ENCODE measurements at regions of chr3 and their contacts with region 1.

Region 1: DNA sequence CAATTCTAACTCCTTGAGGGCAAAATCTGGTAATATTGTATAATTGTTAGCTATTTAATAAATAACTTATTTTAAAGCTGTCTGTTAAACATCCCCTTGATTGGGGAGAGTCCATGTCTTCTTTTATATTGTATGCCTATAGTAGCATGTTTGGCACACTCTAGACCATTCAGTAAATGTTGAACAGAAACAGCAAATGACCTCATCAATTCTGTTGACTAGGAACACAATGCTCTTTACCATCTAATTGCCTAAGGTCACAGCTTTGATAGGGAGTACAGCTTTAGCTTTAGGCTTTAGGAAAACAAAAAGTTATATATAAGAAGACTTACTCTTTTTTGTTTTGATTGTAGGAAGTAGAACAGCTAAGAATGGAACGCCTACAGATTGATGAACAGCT is 27.0 kb downstream of the DNAJC19 start:
- DNase-seq: no peak
- ATAC-seq: no peak
- H3K4me3 Mint-ChIP-seq: no peak overlapping the region
- H3K27ac Mint-ChIP-seq: no peak overlapping the region
- H3K4me1 Mint-ChIP-seq: peaks cover 26% of the 10 kb centered on the region
- H3K27me3 Mint-ChIP-seq: no peaks in the 10 kb centered on the region

Region 2: GRCh38 chr3:180679178-180680096 is 283.1 kb before region 1 on chr3 and contains the start of gene CCDC39:
- CTCF ChIA-PET with region 1: no interaction called
- POLR2A ChIA-PET with region 1: no interaction called
- intact Hi-C with region 1: no loop called
- DNase-seq: peak; percentile 80
- ATAC-seq: peak; percentile 87
- H3K4me3 Mint-ChIP-seq: peak within 1 kb of the TSS; percentile 62
- H3K27ac Mint-ChIP-seq: no peak within 1 kb of the TSS
- H3K4me1 Mint-ChIP-seq: peaks cover 13% of the 10 kb centered on the region
- H3K27me3 Mint-ChIP-seq: peaks cover 49% of the 10 kb centered on the region
- total RNA-seq, gene CCDC39: not detected

Region 3: GRCh38 chr3:180973543-180973942 is 11.0 kb after region 1 on chr3:
- CTCF ChIA-PET with region 1: interaction called, 11 read pairs
- POLR2A ChIA-PET with region 1: no interaction called
- intact Hi-C with region 1: no loop called
- DNase-seq: no peak
- ATAC-seq: no peak
- H3K4me3 Mint-ChIP-seq: no peak overlapping the region
- H3K27ac Mint-ChIP-seq: no peak overlapping the region
- H3K4me1 Mint-ChIP-seq: peaks cover 6% of the 10 kb centered on the region
- H3K27me3 Mint-ChIP-seq: no peaks in the 10 kb centered on the region

Region 4: GRCh38 chr3:181326637-181327223 is 364.2 kb after region 1 on chr3:
- CTCF ChIA-PET with region 1: no interaction called
- POLR2A ChIA-PET with region 1: no interaction called
- intact Hi-C with region 1: no loop called
- DNase-seq: no peak
- ATAC-seq: no peak
- H3K4me3 Mint-ChIP-seq: no peak overlapping the region
- H3K27ac Mint-ChIP-seq: no peak overlapping the region
- H3K4me1 Mint-ChIP-seq: no peaks in the 10 kb centered on the region
- H3K27me3 Mint-ChIP-seq: peaks cover 3% of the 10 kb centered on the region